AG04450 (cell line): ENCODE measurements at regions of chr11 and their contacts with region 1.

Region 1: GRCh38 chr11:95150946-95151684 is 61.5 kb downstream of the ENDOD1 start:
- DNase-seq: peak; percentile 66
- H3K4me3 ChIP-seq: peak overlapping the region; percentile 51
- H3K27ac ChIP-seq: no peak overlapping the region
- H3K27me3 ChIP-seq: no peaks in the 10 kb centered on the region
- CTCF ChIP-seq: peak; percentile 78

Region 2: GRCh38 chr11:95089620-95090542 is 61.2 kb before region 1 on chr11 and contains the start of gene ENDOD1:
- CTCF ChIA-PET with region 1: interaction called, 11 read pairs
- POLR2A ChIA-PET with region 1: interaction called, 3 read pairs
- DNase-seq: no peak
- H3K4me3 ChIP-seq: peak within 1 kb of the TSS; percentile 69
- H3K27ac ChIP-seq: peak within 1 kb of the TSS; percentile 48
- H3K27me3 ChIP-seq: no peaks in the 10 kb centered on the region
- CTCF ChIP-seq: 0 out of 2 replicates have a peak, but pooled peaks have one; percentile 9
- polyA plus RNA-seq, gene ENDOD1: 10.0 and 12.1 TPM in 2 replicates

Region 3: DNA sequence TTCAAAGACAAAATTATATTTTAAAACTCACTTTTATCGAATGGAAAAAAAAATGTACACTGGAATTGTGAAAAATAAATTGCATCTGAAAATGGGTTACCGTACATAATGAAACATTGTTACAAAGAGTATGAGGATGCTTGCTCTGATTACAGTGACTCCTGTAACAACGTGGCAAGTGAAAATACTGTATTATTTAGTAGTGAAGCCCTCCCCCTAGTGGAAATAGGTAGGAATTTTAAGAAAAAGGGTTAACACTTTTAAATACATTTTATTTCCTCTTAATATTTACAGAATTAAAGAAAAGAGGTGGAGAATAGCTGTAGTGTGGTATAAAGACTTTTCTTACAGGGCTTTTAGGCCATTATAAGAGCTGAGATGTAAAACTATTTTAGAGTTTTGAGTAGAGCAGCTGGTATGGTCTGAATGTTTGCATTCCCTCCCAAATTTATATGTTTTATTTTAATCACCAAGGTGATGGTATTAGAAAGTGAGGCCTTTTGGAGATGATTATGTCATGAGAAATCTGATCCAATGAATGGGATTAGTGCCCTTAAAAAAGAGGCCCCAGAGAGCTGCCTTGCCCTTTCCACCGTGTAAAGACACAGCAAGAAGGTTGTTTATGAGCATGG is 613.3 kb after region 1 on chr11:
- CTCF ChIA-PET with region 1: interaction called, 284 read pairs
- POLR2A ChIA-PET with region 1: no interaction called
- DNase-seq: peak; percentile 38
- H3K4me3 ChIP-seq: no peak overlapping the region
- H3K27ac ChIP-seq: no peak overlapping the region
- H3K27me3 ChIP-seq: no peaks in the 10 kb centered on the region
- CTCF ChIP-seq: peak; percentile 63

Region 4: DNA sequence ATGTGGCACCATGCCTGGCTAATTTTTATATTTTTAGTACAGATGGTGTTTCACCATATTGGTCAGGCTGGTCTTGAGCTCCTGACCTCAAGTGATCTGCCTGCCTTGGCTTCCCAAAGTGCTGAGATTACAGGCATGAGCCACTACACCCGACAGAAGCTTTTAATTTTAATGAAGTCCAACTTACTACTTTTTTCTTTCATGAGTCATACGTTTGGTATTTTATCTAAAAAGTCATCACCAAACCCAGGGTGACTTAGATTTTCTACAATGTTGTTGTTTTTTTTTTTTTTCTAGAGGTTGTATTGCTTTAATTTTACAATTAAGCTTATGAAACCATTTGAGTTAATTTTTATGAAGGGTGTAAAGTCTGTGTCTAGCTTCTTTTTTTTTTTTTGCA is 1273.6 kb after region 1 on chr11:
- CTCF ChIA-PET with region 1: interaction called, 14 read pairs
- POLR2A ChIA-PET with region 1: no interaction called
- DNase-seq: peak; percentile 3
- H3K4me3 ChIP-seq: no peak overlapping the region
- H3K27ac ChIP-seq: no peak overlapping the region
- H3K27me3 ChIP-seq: no peaks in the 10 kb centered on the region
- CTCF ChIP-seq: no peak